HEK293T (cell line): ENCODE measurements at regions of chr22 and their contacts with region 1.

Region 1: DNA sequence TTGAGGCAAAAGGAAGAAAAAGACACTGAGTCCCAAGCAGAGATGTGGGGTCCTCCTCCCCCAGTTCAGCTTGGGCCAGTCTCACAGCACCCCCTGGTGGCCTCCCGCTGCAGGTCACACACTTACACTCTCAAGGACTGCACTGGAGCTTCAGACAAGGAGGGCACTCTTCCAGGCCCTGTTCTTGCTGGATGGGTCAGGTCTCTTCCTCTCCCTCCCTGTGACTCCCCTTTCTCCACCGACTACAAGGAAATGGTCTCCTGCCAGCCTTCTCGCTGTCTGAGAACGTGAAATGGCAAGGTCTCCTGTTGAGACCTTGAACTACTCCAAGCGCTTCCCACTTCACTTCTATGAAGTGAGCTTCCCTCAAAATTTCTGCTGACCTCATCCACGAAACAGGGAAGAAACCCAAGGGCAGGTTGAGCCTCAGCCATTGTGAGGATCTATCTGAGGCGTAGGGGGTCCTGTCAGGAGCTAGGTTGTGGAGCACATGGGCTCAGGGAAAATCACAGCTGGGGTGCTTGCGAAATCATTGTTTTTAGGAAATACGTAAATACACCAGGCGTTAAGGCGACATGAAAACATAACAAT is 11.2 kb upstream of the IGLL1 start:
- DNase-seq: peak; percentile 89

Region 2: DNA sequence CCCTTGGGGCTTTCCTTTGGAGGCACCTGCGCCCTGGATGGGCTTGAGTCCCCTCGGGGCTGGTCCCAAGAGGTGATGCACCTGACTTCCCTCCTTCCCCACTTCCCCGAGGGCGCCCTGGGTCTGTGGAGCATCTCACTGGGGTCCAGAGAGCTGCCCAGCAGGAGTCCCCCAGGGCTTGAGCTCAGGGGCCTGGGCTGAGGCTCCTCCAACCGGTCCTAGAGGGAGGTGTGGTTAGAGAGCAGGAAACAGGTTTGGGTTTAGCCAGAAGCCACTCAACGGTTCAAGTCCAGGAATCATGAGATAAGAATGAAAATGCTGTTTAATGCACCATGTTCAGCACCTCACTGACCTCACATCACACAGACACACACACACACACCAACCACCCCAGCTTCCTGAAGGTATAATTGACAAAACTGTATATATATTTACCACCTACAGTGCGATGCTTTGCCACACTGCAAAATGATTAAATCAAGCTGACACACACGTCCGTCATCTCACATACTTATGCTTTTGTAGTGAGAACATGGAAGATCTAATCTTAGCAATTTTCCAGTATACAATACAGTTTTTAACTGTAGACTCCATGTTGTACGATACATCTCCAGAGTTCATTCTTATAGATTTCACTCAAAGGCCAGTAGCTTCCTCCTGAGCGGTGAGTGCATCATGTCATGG is 10.6 kb before region 1 on chr22:
- CTCF ChIA-PET with region 1: interaction called, 12 read pairs
- POLR2A ChIA-PET with region 1: no interaction called
- DNase-seq: no peak